Right ventricle myocardium inferior (tissue), 1 donor: ENCODE measurements at regions of chr15 and their contacts with region 1.

Region 1: GRCh38 chr15:43492673-43493601 is at the start of gene TP53BP1:
- DNase-seq: peak; percentile 99
- ATAC-seq: peak; percentile 99
- total RNA-seq, gene TP53BP1: 24.3 TPM

Region 2: GRCh38 chr15:43346305-43346704 is 146.6 kb before region 1 on chr15:
- intact Hi-C with region 1: no loop called
- DNase-seq: no peak
- ATAC-seq: no peak

Region 3: GRCh38 chr15:43510200-43511011 is 17.5 kb after region 1 on chr15:
- intact Hi-C with region 1: loop called (anchors 2 kb)
- DNase-seq: peak; percentile 100
- ATAC-seq: peak; percentile 97